ENCODE measurements at regions of chr12 and their contacts with region 1.

Region 1: DNA sequence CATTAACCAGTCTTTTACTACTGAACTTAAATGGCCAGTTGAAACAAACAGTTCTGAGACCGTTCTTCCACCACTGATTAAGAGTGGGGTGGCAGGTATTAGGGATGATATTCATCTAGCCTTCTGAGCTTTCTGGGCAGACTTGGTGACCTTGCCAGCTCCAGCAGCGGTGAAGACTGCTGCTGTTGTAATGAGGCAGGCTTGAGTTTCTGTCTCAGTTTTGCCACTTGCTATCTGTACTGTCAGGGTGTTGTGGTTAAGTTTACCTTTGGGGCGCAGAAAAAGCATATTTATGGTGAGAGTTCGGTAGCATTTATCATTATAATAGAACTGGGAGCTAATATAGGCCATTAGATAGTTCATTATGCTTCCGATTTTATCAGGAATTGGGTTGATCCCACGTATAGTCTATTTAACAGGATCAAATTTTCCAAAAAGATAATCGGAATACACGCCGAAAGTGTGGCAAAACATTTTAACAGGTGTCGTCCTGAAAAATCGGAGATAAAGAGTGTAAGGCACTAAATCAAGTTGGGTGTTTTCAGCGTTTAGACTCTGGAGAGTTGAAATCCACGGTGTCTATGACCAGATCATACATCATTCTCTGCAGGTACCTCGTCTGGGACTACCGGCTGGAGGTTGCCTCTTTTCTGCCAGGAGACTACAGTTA is 688 bp upstream of the NECAP1 start:
- DNase-seq: peak; percentile 22 to 34
- H3K4me3 ChIP-seq: peak overlapping the region; percentile 64 to 91 (median 77)
- H3K27ac ChIP-seq: peak overlapping the region; percentile 86 to 96 (median 87)
- H3K4me1 ChIP-seq: peaks cover 8 to 12% of the 10 kb centered on the region in 2 donors
- H3K27me3 ChIP-seq: no peaks in the 10 kb centered on the region
- CTCF ChIP-seq: no peak
- POLR2A ChIP-seq: no peak

Region 2: GRCh38 chr12:8032242-8033152 is 48.9 kb before region 1 on chr12 and contains the start of gene FOXJ2:
- intact Hi-C with region 1: loop called (anchors 5 kb)
- DNase-seq: peak; percentile 74 to 82
- H3K4me3 ChIP-seq: peak within 1 kb of the TSS; percentile 94 to 100 (median 97)
- H3K27ac ChIP-seq: peak within 1 kb of the TSS; percentile 95 to 96 (median 95)
- H3K4me1 ChIP-seq: peaks cover 41 to 42% of the 10 kb centered on the region in 2 donors
- H3K27me3 ChIP-seq: no peaks in the 10 kb centered on the region
- CTCF ChIP-seq: peak in 1 of 6 experiments; percentile 1
- POLR2A ChIP-seq: peak; percentile 39 to 83
- total RNA-seq, gene FOXJ2: 14.0 to 18.3 (median 14.9) TPM

Region 3: DNA sequence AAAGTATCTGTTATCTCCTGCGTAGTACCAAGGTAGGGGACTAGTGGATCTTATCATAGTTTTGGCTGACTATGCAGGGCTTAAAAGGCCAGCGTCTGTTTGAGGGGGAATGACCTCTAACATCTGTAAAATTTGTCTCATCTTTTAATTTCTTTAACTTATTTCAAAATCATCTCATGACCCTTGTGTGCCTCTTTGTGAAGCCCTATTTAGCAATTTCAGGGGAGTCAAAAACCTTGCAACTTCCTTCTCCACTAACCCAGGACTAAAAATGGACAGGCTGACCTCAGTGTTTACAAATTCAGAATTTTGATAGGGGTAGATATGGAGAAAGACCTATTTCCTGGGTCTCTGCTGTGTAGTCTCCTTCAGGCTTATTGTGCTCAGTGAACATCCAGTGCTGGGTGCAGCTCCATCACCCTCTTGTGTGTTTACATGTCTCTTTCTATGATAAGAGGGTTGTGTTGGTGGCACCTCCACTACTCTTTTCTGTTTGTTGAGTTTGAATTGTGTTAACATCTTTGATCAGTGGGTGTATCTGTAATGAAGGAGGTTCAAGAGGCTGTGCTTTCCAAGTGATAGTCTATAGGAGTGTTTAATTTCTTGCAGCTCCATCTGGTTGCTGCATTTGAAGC is 15.0 kb after region 1 on chr12:
- intact Hi-C with region 1: no loop called
- DNase-seq: no peak
- H3K4me3 ChIP-seq: no peak overlapping the region
- H3K27ac ChIP-seq: no peak overlapping the region
- H3K4me1 ChIP-seq: no peaks in the 10 kb centered on the region
- H3K27me3 ChIP-seq: no peaks in the 10 kb centered on the region
- CTCF ChIP-seq: no peak
- POLR2A ChIP-seq: no peak

Measured in thyroid gland (tissue), 4 donors.